SK-N-SH (cell line): ENCODE measurements at regions of chr15 and their contacts with region 1.

Region 1: GRCh38 chr15:100873029-100873677 is 6.5 kb upstream of the ALDH1A3 start:
- DNase-seq: peak; percentile 76
- H3K4me3 ChIP-seq: peak overlapping the region in 1 of 2 experiments; percentile 36; a peak in 1 of 4 replicates
- H3K27ac ChIP-seq: no peak overlapping the region; a peak in 1 of 4 replicates
- H3K4me1 ChIP-seq: peaks cover 0 to 12% of the 10 kb centered on the region in 2 experiments; a peak in 1 of 4 replicates
- H3K27me3 ChIP-seq: no peaks in the 10 kb centered on the region
- CTCF ChIP-seq: peak; percentile 91
- EP300 ChIP-seq: no peak
- RAD21 ChIP-seq: peak; percentile 83

Region 2: GRCh38 chr15:100671858-100672543 is 201.2 kb before region 1 on chr15:
- CTCF ChIA-PET with region 1: interaction called, 87 read pairs
- POLR2A ChIA-PET with region 1: no interaction called
- DNase-seq: peak; percentile 85
- H3K4me3 ChIP-seq: no peak overlapping the region
- H3K27ac ChIP-seq: peak overlapping the region in 1 of 2 experiments; percentile 74; a peak in 2 of 4 replicates
- H3K4me1 ChIP-seq: peaks cover 0 to 23% of the 10 kb centered on the region in 2 experiments; a peak in 2 of 4 replicates
- H3K27me3 ChIP-seq: no peaks in the 10 kb centered on the region
- CTCF ChIP-seq: peak; percentile 76
- EP300 ChIP-seq: no peak
- RAD21 ChIP-seq: peak; percentile 93

Region 3: DNA sequence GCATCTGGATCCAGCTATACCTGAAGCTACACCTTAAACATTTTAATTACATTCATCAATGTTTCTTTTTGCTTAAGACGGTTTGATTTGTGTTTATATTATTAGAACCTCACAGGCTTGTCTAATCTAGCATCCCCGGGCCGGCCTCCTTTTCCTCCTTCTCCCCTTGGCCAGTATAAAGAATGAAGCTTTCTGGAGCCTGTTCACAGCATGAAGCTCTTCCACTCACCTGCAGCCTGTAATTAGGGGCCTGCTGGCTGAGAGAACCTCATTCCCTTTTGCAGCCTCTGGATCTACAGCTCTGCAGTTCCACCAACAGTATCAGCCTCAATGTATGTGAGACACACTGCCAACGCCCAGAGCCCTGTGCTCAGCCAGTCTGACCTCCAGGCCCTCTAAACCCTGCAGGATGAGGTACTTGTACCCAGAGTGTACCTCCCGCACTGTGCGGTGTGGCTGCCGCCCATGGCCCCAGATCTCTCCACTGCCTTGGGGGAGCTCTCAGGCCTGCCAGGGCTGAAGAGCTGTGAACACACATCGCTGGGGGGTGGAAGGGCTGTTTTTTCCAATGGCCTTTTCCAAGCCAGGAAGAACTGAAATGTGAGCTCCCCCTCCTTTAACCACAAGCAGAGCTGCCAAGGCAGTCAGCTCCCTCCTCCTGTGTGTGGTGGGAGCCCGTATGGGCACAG is 108.2 kb before region 1 on chr15:
- CTCF ChIA-PET with region 1: interaction called, 19 read pairs
- POLR2A ChIA-PET with region 1: no interaction called
- DNase-seq: peak; percentile 45
- H3K4me3 ChIP-seq: no peak overlapping the region
- H3K27ac ChIP-seq: peak overlapping the region; percentile 44 to 94; a peak in 3 of 4 replicates
- H3K4me1 ChIP-seq: peaks cover 8 to 80% of the 10 kb centered on the region in 2 experiments; a peak in 3 of 4 replicates
- H3K27me3 ChIP-seq: no peaks in the 10 kb centered on the region
- CTCF ChIP-seq: no peak
- EP300 ChIP-seq: peak in 1 of 2 experiments; percentile 68; a peak in 1 of 4 replicates
- RAD21 ChIP-seq: no peak

Region 4: GRCh38 chr15:100781061-100781960 is 91.8 kb before region 1 on chr15:
- CTCF ChIA-PET with region 1: interaction called, 17 read pairs
- POLR2A ChIA-PET with region 1: interaction called, 3 read pairs
- DNase-seq: peak; percentile 88
- H3K4me3 ChIP-seq: no peak overlapping the region; a peak in 1 of 4 replicates
- H3K27ac ChIP-seq: peak overlapping the region; percentile 11 to 98; a peak in 3 of 4 replicates
- H3K4me1 ChIP-seq: peaks cover 0 to 56% of the 10 kb centered on the region in 2 experiments; a peak in 2 of 4 replicates
- H3K27me3 ChIP-seq: no peaks in the 10 kb centered on the region
- CTCF ChIP-seq: no peak
- EP300 ChIP-seq: peak in 1 of 2 experiments; percentile 93; a peak in 2 of 4 replicates
- RAD21 ChIP-seq: peak; percentile 47

Region 5: DNA sequence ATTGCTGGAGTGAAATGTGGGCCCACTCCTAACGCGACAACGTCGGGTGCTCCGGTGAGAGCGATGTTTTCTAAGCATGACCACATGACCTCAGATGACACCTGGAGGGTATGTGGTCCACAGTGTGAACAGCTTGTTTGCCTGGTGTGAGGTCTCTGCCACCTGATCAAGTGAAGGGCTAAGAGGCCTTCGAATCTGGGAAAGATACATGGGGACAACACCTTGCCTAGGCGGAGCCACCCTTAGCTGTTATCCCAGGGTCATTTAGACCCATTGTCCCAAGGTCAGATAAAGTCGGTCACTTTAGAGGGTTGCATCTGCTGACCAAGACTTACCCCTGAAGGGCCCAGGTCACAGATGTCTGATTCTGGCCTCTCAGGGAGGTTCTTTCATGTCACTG is 28.4 kb before region 1 on chr15:
- CTCF ChIA-PET with region 1: interaction called, 10 read pairs
- POLR2A ChIA-PET with region 1: no interaction called
- DNase-seq: no peak
- H3K4me3 ChIP-seq: no peak overlapping the region
- H3K27ac ChIP-seq: no peak overlapping the region
- H3K4me1 ChIP-seq: peaks cover 0 to 10% of the 10 kb centered on the region in 2 experiments; a peak in 2 of 4 replicates
- H3K27me3 ChIP-seq: no peaks in the 10 kb centered on the region
- CTCF ChIP-seq: no peak
- EP300 ChIP-seq: no peak
- RAD21 ChIP-seq: no peak

Region 6: GRCh38 chr15:100918034-100918689 is 45.0 kb after region 1 on chr15:
- CTCF ChIA-PET with region 1: interaction called, 19 read pairs
- POLR2A ChIA-PET with region 1: no interaction called
- DNase-seq: peak; percentile 93
- H3K4me3 ChIP-seq: peak overlapping the region; percentile 67 to 73
- H3K27ac ChIP-seq: peak overlapping the region in 1 of 2 experiments; percentile 16; a peak in 1 of 4 replicates
- H3K4me1 ChIP-seq: peaks cover 0 to 29% of the 10 kb centered on the region in 2 experiments; a peak in 1 of 4 replicates
- H3K27me3 ChIP-seq: no peaks in the 10 kb centered on the region
- CTCF ChIP-seq: peak; percentile 71
- EP300 ChIP-seq: no peak
- RAD21 ChIP-seq: peak; percentile 64